CD4-positive, alpha-beta memory T cell (primary cell): ENCODE measurements at regions of chr19 and their contacts with region 1.

Region 1: DNA sequence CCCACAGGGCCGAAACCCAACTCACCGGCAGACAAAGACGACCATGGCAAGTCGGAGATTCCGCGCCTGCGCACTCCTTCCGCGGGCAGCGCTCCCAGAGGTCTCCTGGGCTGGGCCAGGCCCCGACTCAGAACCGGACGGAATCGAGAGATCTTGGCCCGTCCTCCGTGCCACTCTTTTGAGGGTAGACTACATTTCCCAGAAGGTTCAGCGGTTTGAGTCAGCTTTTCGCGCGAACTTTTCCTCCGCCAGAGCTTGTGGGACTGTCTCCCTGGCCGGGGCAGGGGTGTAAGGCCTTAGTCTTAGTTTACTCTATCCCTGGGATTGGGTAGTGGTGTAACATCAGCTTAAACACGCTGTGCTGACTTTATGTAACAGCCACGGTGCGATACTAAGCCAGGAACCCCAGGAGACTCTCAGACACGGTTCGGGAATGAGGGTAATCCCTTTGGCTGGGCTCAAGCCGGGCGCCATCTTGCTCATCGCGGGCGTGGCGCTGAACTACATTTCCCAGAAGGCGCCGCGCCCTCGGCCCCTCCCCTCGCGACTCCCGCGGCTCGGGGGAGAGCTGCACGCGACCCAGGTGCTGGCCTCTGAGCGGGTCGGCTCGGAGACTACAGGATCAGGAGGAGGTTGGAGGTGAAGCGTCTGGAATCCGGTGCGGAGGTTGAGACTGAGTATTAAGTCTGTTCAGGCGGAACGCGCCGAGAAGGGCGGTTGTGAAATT is at the start of gene ZNF260:
- DNase-seq: peak; percentile 90 to 95 (median 93)
- H3K4me3 ChIP-seq: peak within 1 kb of the TSS; percentile 88 to 99
- H3K4me3 Mint-ChIP-seq: peak within 1 kb of the TSS; percentile 91 to 100 (median 97)
- H3K27ac ChIP-seq: peak within 1 kb of the TSS; percentile 87
- H3K27ac Mint-ChIP-seq: peak within 1 kb of the TSS; percentile 91 to 99 (median 97)
- H3K4me1 ChIP-seq: peaks cover 22% of the 10 kb centered on the region
- H3K4me1 Mint-ChIP-seq: peaks cover 17 to 29% (median 22%) of the 10 kb centered on the region in 4 donors
- H3K27me3 ChIP-seq: no peaks in the 10 kb centered on the region
- H3K27me3 Mint-ChIP-seq: no peaks in the 10 kb centered on the region
- total RNA-seq, gene ZNF260: 15.4 to 18.8 TPM

Region 2: DNA sequence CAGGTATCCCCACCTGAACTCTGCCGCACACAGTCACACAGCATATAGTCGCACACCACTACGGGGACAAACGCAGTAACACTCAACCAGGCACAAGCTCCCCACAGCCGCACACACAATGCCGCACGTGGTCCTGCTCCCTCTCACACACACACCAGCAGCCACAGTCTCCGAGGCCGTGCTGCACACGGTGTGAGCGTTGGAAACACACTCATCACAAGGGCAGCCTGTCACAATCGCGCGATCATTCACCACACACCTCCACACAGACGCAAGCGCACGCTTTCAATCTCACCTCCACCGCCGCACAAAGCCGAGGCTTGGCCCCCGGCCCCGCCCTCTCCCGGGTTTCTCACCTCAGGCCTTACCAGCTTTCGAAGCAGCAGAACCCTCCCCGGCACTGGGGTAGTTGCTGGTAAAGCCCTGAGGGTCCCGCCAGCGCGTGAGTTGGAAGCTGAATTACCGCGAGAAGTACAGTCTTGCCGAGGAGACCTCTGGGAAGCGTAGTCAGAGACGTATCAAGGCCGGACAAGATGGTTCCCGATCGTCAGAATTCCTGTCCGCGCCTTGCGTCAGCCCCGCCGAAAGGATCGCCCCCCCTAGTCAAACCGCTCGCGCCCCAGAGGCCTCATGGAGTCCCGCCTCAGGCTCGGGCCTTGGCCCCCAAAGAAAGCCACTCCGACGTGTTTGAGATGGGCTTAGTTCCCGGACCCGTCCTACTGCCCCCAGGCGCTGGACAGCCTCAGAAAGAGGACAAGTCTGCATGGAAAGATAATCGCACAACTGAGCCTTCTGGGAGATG is 39.0 kb before region 1 on chr19 and contains the start of gene ZNF566:
- CTCF ChIA-PET with region 1: interaction called, 3 read pairs
- POLR2A ChIA-PET with region 1: interaction called, 51 read pairs
- intact Hi-C with region 1: loop called (anchors 1 kb)
- DNase-seq: peak; percentile 94 to 98 (median 96)
- H3K4me3 ChIP-seq: peak within 1 kb of the TSS; percentile 92 to 99
- H3K4me3 Mint-ChIP-seq: peak within 1 kb of the TSS; percentile 97 to 100 (median 98)
- H3K27ac ChIP-seq: peak within 1 kb of the TSS; percentile 93
- H3K27ac Mint-ChIP-seq: peak within 1 kb of the TSS; percentile 98 to 99 (median 98)
- H3K4me1 ChIP-seq: peaks cover 24% of the 10 kb centered on the region
- H3K4me1 Mint-ChIP-seq: peaks cover 22 to 36% (median 28%) of the 10 kb centered on the region in 4 donors
- H3K27me3 ChIP-seq: no peaks in the 10 kb centered on the region
- H3K27me3 Mint-ChIP-seq: no peaks in the 10 kb centered on the region
- total RNA-seq, gene ZNF566: 25.9 to 30.6 TPM

Region 3: GRCh38 chr19:36605101-36605876 is 76.9 kb after region 1 on chr19 and contains the start of gene ZNF382:
- CTCF ChIA-PET with region 1: interaction called, 8 read pairs
- POLR2A ChIA-PET with region 1: interaction called, 30 read pairs
- intact Hi-C with region 1: loop called (anchors 1 kb)
- DNase-seq: peak; percentile 85 to 89 (median 86)
- H3K4me3 ChIP-seq: peak within 1 kb of the TSS; percentile 32 to 85
- H3K4me3 Mint-ChIP-seq: peak within 1 kb of the TSS; percentile 90 to 99 (median 96)
- H3K27ac ChIP-seq: peak within 1 kb of the TSS; percentile 91
- H3K27ac Mint-ChIP-seq: peak within 1 kb of the TSS; percentile 82 to 98 (median 92)
- H3K4me1 ChIP-seq: peaks cover 16% of the 10 kb centered on the region
- H3K4me1 Mint-ChIP-seq: peaks cover 17 to 33% (median 23%) of the 10 kb centered on the region in 4 donors
- H3K27me3 ChIP-seq: no peaks in the 10 kb centered on the region
- H3K27me3 Mint-ChIP-seq: peaks cover 0 to 1% of the 10 kb centered on the region in 2 donors
- total RNA-seq, gene ZNF382: 21.1 to 21.9 TPM

Region 4: DNA sequence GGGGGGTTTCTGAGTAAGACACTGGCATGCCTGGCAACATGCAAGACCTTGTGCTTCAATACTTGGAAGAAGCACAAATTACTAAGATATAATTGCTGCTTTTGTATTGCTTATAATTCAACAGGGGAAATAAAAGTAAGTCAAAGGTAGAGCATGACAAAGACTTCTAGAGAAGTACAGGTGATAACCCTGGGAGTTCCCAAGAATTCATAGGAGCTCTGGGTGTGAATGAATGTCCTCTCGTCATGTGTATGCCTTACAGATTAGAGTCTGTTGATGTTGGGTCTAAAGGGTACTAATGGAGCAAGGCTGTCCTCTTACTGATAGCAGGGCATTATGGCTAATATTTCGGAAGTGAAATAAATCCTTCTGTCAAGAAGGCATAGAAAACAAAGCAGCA is 145.8 kb after region 1 on chr19:
- CTCF ChIA-PET with region 1: no interaction called
- POLR2A ChIA-PET with region 1: no interaction called
- intact Hi-C with region 1: no loop called
- DNase-seq: no peak
- H3K4me3 ChIP-seq: no peak overlapping the region
- H3K4me3 Mint-ChIP-seq: no peak overlapping the region
- H3K27ac ChIP-seq: no peak overlapping the region
- H3K27ac Mint-ChIP-seq: no peak overlapping the region
- H3K4me1 ChIP-seq: peaks cover 1% of the 10 kb centered on the region
- H3K4me1 Mint-ChIP-seq: peaks cover 1 to 9% (median 2%) of the 10 kb centered on the region in 4 donors
- H3K27me3 ChIP-seq: no peaks in the 10 kb centered on the region
- H3K27me3 Mint-ChIP-seq: no peaks in the 10 kb centered on the region

Region 5: GRCh38 chr19:36687214-36688056 is 159.1 kb after region 1 on chr19 and contains the start of gene ZNF567:
- CTCF ChIA-PET with region 1: interaction called, 3 read pairs
- POLR2A ChIA-PET with region 1: interaction called, 10 read pairs
- intact Hi-C with region 1: loop called (anchors 2 kb)
- DNase-seq: peak; percentile 94 to 96 (median 95)
- H3K4me3 ChIP-seq: peak within 1 kb of the TSS; percentile 62 to 80
- H3K4me3 Mint-ChIP-seq: peak within 1 kb of the TSS; percentile 97 to 100 (median 99)
- H3K27ac ChIP-seq: peak within 1 kb of the TSS; percentile 75
- H3K27ac Mint-ChIP-seq: peak within 1 kb of the TSS; percentile 95 to 99 (median 97)
- H3K4me1 ChIP-seq: peaks cover 22% of the 10 kb centered on the region
- H3K4me1 Mint-ChIP-seq: peaks cover 22 to 49% (median 30%) of the 10 kb centered on the region in 4 donors
- H3K27me3 ChIP-seq: no peaks in the 10 kb centered on the region
- H3K27me3 Mint-ChIP-seq: no peaks in the 10 kb centered on the region
- total RNA-seq, gene ZNF567: 17.0 to 19.8 TPM

Region 6: GRCh38 chr19:37172368-37173366 is 644.3 kb after region 1 on chr19 and contains the start of gene ZNF585A:
- CTCF ChIA-PET with region 1: no interaction called
- POLR2A ChIA-PET with region 1: no interaction called
- intact Hi-C with region 1: loop called (anchors 1 kb)
- DNase-seq: peak; percentile 90 to 94 (median 92)
- H3K4me3 ChIP-seq: peak within 1 kb of the TSS; percentile 81 to 82
- H3K4me3 Mint-ChIP-seq: peak within 1 kb of the TSS in 3 of 8 donors; percentile 12 to 51 (median 26)
- H3K27ac ChIP-seq: peak within 1 kb of the TSS; percentile 61
- H3K27ac Mint-ChIP-seq: no peak within 1 kb of the TSS
- H3K4me1 ChIP-seq: peaks cover 17% of the 10 kb centered on the region
- H3K4me1 Mint-ChIP-seq: peaks cover 0 to 2% (median 0%) of the 10 kb centered on the region in 4 donors
- H3K27me3 ChIP-seq: no peaks in the 10 kb centered on the region
- H3K27me3 Mint-ChIP-seq: no peaks in the 10 kb centered on the region
- total RNA-seq, gene ZNF585A: 16.5 to 25.4 TPM

Region 7: DNA sequence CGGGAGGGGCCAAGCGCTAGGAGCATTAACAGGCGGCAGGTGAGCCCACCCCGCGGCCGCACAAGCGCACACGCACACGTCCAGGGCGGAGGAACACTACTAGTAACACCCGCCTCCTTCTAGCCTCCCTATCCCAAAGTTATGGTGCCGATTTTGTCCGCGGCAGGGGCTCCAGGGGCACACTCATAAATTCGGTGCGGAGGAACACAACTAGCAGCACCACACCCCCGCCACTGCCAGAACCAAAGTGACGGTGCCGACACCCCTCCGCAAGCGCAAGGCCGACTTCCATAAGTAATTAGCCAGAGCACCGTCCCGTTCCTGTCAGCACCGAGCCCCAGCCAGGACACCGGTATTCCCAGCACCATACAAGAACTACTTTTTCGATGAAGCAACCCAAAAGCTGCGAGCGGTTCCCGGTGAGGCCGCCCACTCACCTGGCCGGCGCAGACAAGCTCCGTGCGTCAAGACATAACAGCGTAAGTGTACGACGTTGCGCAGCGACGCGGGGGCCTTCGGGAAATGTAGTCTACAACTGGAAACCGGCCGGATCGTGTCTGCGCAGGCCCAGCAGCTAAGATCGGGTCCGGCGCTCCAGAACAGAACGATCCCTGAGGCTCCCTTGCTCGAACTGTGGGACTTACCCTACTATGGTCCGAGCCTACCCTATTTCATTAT is 1066.1 kb after region 1 on chr19 and contains the starts of genes ZNF540 and ZNF571:
- CTCF ChIA-PET with region 1: no interaction called
- POLR2A ChIA-PET with region 1: interaction called, 9 read pairs
- intact Hi-C with region 1: loop called (anchors 1 kb)
- DNase-seq: peak; percentile 88 to 96 (median 92)
- H3K4me3 ChIP-seq: peak within 1 kb of the TSS; percentile 91 to 92
- H3K4me3 Mint-ChIP-seq: peak within 1 kb of the TSS; percentile 94 to 99 (median 97)
- H3K27ac ChIP-seq: peak within 1 kb of the TSS; percentile 98
- H3K27ac Mint-ChIP-seq: peak within 1 kb of the TSS; percentile 97 to 99 (median 99)
- H3K4me1 ChIP-seq: peaks cover 24% of the 10 kb centered on the region
- H3K4me1 Mint-ChIP-seq: peaks cover 21 to 47% (median 30%) of the 10 kb centered on the region in 4 donors
- H3K27me3 ChIP-seq: no peaks in the 10 kb centered on the region
- H3K27me3 Mint-ChIP-seq: no peaks in the 10 kb centered on the region
- total RNA-seq, gene ZNF540: 24.2 to 24.5 TPM
- total RNA-seq, gene ZNF571: 10.1 to 14.2 TPM